PC-9 (cell line): ENCODE measurements at regions of chr2 and their contacts with region 1.

Region 1: GRCh38 chr2:97806738-97807618 is 93.6 kb downstream of the ZAP70 start:
- DNase-seq: peak in 1 of 2 experiments; percentile 65
- H3K4me3 ChIP-seq: no peak overlapping the region
- H3K27ac ChIP-seq: no peak overlapping the region
- H3K4me1 ChIP-seq: no peaks in the 10 kb centered on the region
- H3K27me3 ChIP-seq: no peaks in the 10 kb centered on the region
- CTCF ChIP-seq: peak; percentile 95

Region 2: DNA sequence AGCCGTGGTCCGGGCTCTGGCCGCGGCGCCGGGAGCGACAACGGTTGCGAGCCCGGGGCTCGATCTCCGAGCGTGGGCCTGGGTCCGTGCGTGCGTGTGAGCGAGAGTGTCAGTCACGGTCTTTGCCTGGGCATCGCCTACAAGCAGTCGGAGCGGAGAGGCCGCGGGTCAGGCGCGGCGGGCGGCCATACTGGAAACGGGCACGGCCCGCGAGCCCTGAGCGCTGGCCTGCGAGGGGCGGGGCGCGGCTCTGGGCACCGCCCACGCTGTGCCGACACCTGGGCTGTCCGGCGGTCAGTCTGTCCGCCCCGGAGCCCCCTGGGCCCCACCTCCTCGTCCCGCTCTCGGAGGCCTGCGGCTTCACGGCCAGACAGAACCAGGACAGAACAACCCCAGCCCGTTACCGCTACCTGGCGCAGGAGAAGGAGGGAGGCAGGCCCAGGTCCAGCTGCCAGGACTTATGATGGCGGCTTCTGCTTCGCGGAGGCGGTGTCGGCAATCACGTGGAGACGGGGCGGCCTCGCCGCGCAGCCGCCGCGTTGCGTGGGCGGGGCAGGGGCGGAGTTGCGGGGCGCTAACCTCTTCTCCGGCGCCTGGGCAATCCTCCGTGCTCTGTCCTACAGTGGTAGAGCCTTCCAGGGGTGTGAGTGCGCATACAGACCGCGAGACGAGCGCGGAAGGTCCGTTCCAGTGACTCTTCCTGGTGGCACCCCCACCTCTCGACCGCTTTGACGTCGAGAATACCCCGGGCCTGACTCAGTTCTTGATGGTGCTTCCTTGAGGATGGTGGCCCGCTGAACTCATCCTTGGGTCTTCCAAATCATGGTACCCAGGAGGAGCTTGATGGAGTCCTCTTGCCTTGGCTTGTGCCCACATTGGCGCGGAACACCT is 189.0 kb after region 1 on chr2 and contains the start of gene TMEM131:
- CTCF ChIA-PET with region 1: no interaction called
- POLR2A ChIA-PET with region 1: no interaction called
- intact Hi-C with region 1: loop called (anchors 1 kb)
- DNase-seq: peak; percentile 84 to 97
- H3K4me3 ChIP-seq: peak within 1 kb of the TSS; percentile 98
- H3K27ac ChIP-seq: peak within 1 kb of the TSS; percentile 80
- H3K4me1 ChIP-seq: peaks cover 38% of the 10 kb centered on the region
- H3K27me3 ChIP-seq: no peaks in the 10 kb centered on the region
- CTCF ChIP-seq: no peak
- total RNA-seq, gene TMEM131: 22.8 and 29.6 TPM in 2 replicates

Region 3: DNA sequence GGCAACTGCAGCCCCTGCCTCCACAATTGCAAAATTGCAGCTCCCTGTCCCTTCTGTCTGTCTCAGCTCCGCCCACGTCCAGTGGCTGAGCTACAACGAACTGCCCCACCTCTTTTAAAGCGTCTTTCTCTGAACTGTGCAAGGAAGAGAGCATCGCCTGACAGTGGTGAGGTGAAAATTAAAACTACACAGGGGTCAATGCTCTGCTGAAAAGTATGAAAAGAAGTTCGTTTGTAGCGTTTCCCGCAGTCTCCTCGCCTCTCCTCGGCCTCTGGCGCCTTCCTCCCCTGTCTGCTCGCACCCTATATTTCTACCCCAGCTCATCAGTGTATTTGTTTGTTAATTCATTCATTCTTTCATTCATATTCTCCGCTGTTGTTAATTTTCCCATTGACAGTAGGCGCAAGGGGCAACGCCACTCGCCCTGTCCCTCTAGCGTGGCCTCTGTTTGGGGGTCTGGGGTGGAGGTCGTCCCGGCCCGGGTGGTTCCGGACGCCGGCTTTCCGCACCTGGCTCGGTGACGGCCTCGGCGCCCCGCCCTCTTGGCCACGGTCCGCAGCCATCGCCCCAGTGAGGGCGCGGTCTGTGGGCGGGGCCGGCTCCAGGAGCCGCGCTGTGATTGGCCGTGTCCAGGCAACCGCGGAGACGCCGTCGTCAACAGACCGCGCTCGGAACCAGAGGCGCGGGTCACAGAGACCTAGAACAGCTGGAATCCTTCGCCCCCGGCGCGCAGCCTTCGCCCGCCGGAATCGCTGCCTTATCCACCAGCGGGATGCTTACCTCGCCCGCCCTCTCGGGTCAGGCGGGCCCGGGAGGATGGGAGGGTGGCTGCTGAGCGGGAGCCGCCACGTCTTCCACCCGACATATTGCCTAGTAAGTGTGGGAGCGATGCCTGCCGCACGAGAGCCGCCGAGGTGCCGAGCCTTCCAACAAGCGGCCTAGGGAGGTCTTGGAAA is 279.8 kb after region 1 on chr2 and contains the start of gene VWA3B:
- CTCF ChIA-PET with region 1: no interaction called
- POLR2A ChIA-PET with region 1: no interaction called
- intact Hi-C with region 1: loop called (anchors 2 kb)
- DNase-seq: peak in 1 of 2 experiments; percentile 45
- H3K4me3 ChIP-seq: peak within 1 kb of the TSS; percentile 58
- H3K27ac ChIP-seq: no peak within 1 kb of the TSS
- H3K4me1 ChIP-seq: peaks cover 12% of the 10 kb centered on the region
- H3K27me3 ChIP-seq: no peaks in the 10 kb centered on the region
- CTCF ChIP-seq: no peak
- total RNA-seq, gene VWA3B: not detected in 2 replicates

Region 4: DNA sequence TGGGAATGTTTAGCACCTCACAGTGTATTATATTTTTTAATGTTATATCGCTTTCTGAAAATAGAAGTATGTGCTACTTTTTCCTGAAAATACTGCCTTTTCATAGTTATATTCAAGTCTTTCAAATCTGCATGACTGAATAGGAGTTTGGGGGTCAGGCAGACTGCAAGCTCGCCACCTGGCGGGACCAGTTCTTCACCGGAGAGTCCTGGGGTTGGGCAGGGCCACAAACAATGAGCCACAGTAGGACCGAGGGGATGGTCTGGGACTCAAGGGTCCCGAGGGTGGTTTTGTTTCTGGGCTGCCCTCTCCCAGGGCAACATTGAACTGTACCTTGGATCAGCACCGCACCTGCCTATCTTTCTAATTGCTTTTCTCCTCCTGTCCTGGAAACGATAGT is 350.6 kb after region 1 on chr2:
- CTCF ChIA-PET with region 1: no interaction called
- POLR2A ChIA-PET with region 1: no interaction called
- intact Hi-C with region 1: loop called (anchors 2 kb)
- DNase-seq: peak in 1 of 2 experiments; percentile 12
- H3K4me3 ChIP-seq: no peak overlapping the region
- H3K27ac ChIP-seq: no peak overlapping the region
- H3K4me1 ChIP-seq: no peaks in the 10 kb centered on the region
- H3K27me3 ChIP-seq: peaks cover 11% of the 10 kb centered on the region; the same call in 1 of the 2 replicates
- CTCF ChIP-seq: no peak

Region 5: GRCh38 chr2:98188351-98189049 is 381.5 kb after region 1 on chr2:
- CTCF ChIA-PET with region 1: interaction called, 3 read pairs
- POLR2A ChIA-PET with region 1: no interaction called
- intact Hi-C with region 1: loop called (anchors 5 kb)
- DNase-seq: peak; percentile 44 to 94
- H3K4me3 ChIP-seq: no peak overlapping the region
- H3K27ac ChIP-seq: no peak overlapping the region
- H3K4me1 ChIP-seq: peaks cover 5% of the 10 kb centered on the region
- H3K27me3 ChIP-seq: no peaks in the 10 kb centered on the region
- CTCF ChIP-seq: peak; percentile 55

Region 6: GRCh38 chr2:98269274-98269673 is 462.3 kb after region 1 on chr2:
- CTCF ChIA-PET with region 1: interaction called, 4 read pairs
- POLR2A ChIA-PET with region 1: no interaction called
- intact Hi-C with region 1: loop called (anchors 1 kb)
- DNase-seq: peak in 1 of 2 experiments; percentile 21
- H3K4me3 ChIP-seq: no peak overlapping the region
- H3K27ac ChIP-seq: no peak overlapping the region
- H3K4me1 ChIP-seq: no peaks in the 10 kb centered on the region
- H3K27me3 ChIP-seq: no peaks in the 10 kb centered on the region
- CTCF ChIP-seq: peak; percentile 94

Region 7: GRCh38 chr2:98385050-98385699 is 578.2 kb after region 1 on chr2:
- CTCF ChIA-PET with region 1: interaction called, 5 read pairs
- POLR2A ChIA-PET with region 1: no interaction called
- intact Hi-C with region 1: loop called (anchors 1 kb)
- DNase-seq: peak; percentile 63 to 74
- H3K4me3 ChIP-seq: no peak overlapping the region
- H3K27ac ChIP-seq: no peak overlapping the region
- H3K4me1 ChIP-seq: no peaks in the 10 kb centered on the region
- H3K27me3 ChIP-seq: peaks cover 25% of the 10 kb centered on the region
- CTCF ChIP-seq: peak; percentile 99